A673 (cell line): ENCODE measurements at regions of chr14 and their contacts with region 1.

Region 1: GRCh38 chr14:64986578-64987571 is at the start of gene FNTB:
- DNase-seq: peak; percentile 99
- H3K4me3 ChIP-seq: peak within 1 kb of the TSS; percentile 73
- H3K27ac ChIP-seq: peak within 1 kb of the TSS; percentile 76
- H3K4me1 ChIP-seq: peaks cover 5% of the 10 kb centered on the region
- H3K27me3 ChIP-seq: no peaks in the 10 kb centered on the region
- CTCF ChIP-seq: peak; percentile 93
- total RNA-seq, gene FNTB: 22.4 and 24.0 TPM in 2 replicates

Region 2: DNA sequence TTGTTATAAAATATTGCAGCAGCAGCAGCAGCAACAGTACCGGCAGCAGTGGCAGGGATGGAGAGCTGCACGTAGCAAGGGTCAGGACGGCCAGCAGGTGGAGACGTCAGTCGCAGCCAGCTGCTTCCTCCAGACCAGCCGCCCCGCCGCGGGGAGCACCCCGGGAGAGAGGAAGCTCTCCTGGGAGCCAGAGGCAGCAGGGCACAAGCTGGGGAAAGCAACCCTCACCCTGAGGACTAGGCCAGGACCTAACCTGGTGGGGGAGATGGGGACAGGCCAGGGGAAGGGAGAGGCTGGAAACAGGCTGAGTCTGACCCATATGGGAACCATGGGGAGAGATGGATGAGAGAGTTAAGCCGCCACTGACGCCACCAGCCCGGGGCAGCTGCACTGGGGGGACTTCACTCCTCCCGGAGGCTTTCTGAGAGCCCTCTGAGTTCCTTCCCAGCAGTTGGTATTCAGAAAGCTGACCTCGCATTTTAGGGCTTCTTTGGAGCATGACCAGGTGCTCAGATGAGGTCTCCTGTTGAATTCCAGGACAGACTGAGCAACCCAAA is 163.5 kb before region 1 on chr14:
- CTCF ChIA-PET with region 1: no interaction called
- POLR2A ChIA-PET with region 1: no interaction called
- intact Hi-C with region 1: loop called (anchors 5 kb)
- DNase-seq: peak; percentile 74
- H3K4me3 ChIP-seq: no peak overlapping the region
- H3K27ac ChIP-seq: no peak overlapping the region
- H3K4me1 ChIP-seq: peaks cover 9% of the 10 kb centered on the region
- H3K27me3 ChIP-seq: no peaks in the 10 kb centered on the region
- CTCF ChIP-seq: peak; percentile 69

Region 3: GRCh38 chr14:64914237-64914971 is 72.5 kb before region 1 on chr14 and contains the start of gene CHURC1:
- CTCF ChIA-PET with region 1: no interaction called
- POLR2A ChIA-PET with region 1: no interaction called
- intact Hi-C with region 1: loop called (anchors 5 kb)
- DNase-seq: peak; percentile 100
- H3K4me3 ChIP-seq: peak within 1 kb of the TSS; percentile 92
- H3K27ac ChIP-seq: peak within 1 kb of the TSS; percentile 91
- H3K4me1 ChIP-seq: peaks cover 16% of the 10 kb centered on the region
- H3K27me3 ChIP-seq: no peaks in the 10 kb centered on the region
- CTCF ChIP-seq: no peak
- total RNA-seq, gene CHURC1: 61.9 and 65.2 TPM in 2 replicates